K562 (cell line): ENCODE measurements at regions of chr7 and their contacts with region 1.

Region 1: DNA sequence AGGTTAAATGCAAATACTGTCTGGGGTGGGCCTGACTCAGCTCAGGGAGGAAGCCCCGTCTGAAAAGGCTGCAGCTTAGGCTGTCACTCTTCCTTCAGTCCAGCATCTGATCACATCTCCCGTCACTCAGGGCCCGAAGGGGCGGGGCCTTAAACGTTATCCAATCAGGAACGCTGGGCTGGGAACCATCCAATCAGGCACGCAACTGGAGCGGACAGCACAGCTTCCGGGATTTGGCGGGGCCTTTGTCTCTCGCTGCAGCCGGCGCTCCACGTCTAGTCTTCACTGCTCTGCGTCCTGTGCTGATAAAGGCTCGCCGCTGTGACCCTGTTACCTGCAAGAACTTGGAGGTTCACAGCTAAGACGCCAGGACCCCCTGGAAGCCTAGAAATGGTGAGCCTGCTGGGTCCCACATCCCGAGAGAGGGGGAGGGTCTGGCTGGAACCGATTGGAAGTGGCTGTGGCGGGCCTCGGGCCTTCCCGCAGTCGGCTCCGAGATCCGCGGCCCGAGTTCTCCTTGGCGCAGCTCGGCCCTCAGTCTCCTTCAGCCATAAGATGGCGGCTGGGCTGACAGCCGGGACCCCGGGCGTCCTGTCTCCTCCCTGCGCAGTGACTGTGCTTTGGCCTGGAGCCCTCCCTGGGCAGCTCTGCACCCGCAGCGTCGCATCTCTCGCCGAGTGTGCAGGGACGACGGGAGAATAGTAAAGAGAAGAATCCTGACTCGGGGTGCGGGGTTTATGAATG is at the start of gene ZNF92:
- DNase-seq: peak; percentile 98 to 100 (median 98)
- ATAC-seq: peak; percentile 98
- H3K4me3 ChIP-seq: peak within 1 kb of the TSS; percentile 72
- H3K27ac ChIP-seq: peak within 1 kb of the TSS; percentile 87
- H3K4me1 ChIP-seq: peaks cover 4 to 5% of the 10 kb centered on the region in 2 experiments; a peak in 4 of 5 replicates
- H3K27me3 ChIP-seq: no peaks in the 10 kb centered on the region
- CTCF ChIP-seq: no peak
- EP300 ChIP-seq: no peak
- POLR2A ChIP-seq: peak; percentile 99
- RAD21 ChIP-seq: no peak
- polyA plus RNA-seq, gene ZNF92: 8.9 to 11.0 TPM

Region 2: DNA sequence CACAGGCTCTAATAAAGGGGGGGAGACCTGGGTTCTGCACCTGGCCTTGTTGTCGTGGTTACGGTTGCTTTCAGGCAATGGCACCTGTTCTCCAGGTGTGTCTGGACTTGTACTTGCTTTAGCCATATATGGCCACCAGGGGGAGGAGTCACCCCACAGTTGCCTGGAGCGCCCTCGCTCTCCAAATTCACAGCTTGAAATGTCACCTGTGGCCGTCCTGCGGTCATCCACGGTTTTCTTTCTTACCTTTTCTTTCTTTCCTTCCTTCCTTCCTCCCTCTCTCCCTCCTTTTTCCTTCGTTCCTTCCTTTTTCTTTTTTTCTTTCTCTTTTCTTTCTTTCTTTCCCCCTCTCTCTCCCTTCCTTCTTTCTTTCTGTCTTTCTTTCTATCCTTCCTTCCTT is 157.3 kb before region 1 on chr7:
- CTCF ChIA-PET with region 1: no interaction called
- POLR2A ChIA-PET with region 1: no interaction called
- in situ Hi-C with region 1: no loop called
- intact Hi-C with region 1: no loop called
- DNase-seq: peak in 2 of 4 experiments; percentile 52 to 83
- ATAC-seq: peak; percentile 93
- H3K4me3 ChIP-seq: no peak overlapping the region
- H3K27ac ChIP-seq: no peak overlapping the region
- H3K4me1 ChIP-seq: no peaks in the 10 kb centered on the region
- H3K27me3 ChIP-seq: no peaks in the 10 kb centered on the region
- CTCF ChIP-seq: peak; percentile 83 to 93 (median 84)
- EP300 ChIP-seq: no peak
- POLR2A ChIP-seq: no peak
- RAD21 ChIP-seq: peak; percentile 64 to 88

Region 3: DNA sequence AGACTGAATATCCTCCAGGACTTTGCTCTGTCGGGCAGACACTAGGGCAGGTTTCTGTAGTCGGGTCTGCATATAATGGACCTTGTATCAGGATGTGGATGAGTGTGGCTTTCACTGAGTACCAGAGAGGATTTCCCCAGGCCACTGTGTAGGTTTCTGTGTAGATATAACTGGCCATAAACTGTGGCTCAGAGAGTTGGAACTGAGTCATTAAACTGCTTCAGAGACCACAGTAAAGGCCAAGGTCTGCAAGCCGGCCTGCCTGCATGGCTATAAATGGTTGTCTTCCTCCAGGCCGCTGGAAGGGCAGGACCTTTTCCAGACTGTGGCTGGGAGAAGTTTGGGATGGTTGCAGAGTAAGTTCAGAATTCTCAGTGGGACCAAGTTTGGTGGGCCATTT is 16.8 kb after region 1 on chr7:
- CTCF ChIA-PET with region 1: no interaction called
- POLR2A ChIA-PET with region 1: interaction called, 12 read pairs
- in situ Hi-C with region 1: no loop called
- intact Hi-C with region 1: no loop called
- DNase-seq: no peak
- ATAC-seq: peak; percentile 41; the same call in 2 of the 3 replicates
- H3K4me3 ChIP-seq: no peak overlapping the region
- H3K27ac ChIP-seq: no peak overlapping the region
- H3K4me1 ChIP-seq: no peaks in the 10 kb centered on the region; a peak in 1 of 5 replicates
- H3K27me3 ChIP-seq: no peaks in the 10 kb centered on the region
- CTCF ChIP-seq: no peak
- EP300 ChIP-seq: no peak
- POLR2A ChIP-seq: no peak
- RAD21 ChIP-seq: no peak